GM12878 (cell line): ENCODE measurements at regions of chr14 and their contacts with region 1.

Region 1: DNA sequence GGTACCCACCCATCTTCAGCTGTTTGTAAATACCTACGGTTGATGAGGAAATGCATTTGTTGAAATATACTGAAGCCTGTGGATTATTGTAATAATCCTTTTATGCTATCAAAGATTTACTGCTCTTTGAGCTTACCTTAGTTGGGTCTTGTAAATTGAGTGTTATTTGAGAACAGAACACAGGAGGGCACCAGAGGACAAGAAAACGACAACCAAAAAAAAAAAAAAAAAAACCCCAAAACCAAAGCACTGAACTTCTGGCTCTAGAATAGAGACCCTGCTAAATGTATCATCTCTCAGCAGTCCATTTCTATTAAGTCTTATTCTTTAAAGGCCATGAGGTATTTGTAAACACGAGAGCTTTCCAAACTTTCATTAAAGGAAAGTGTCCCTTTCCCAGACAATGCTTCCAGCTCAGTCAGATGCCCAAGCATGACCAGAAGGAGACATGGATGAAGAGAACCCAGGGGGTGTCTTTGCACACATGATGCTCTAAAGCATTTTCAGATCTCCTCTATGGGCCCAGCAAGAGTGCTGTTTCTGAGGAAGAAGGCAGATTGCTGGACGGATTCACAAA is 763.9 kb downstream of the NRXN3 start:
- DNase-seq: no peak
- ATAC-seq: peak; percentile 33; the same call in 2 of the 3 replicates
- H3K4me3 ChIP-seq: no peak overlapping the region
- H3K27ac ChIP-seq: no peak overlapping the region
- H3K4me1 ChIP-seq: no peaks in the 10 kb centered on the region
- H3K27me3 ChIP-seq: no peaks in the 10 kb centered on the region
- CTCF ChIP-seq: peak; percentile 33 to 49 (median 41); a peak in 3 of 6 replicates
- EP300 ChIP-seq: no peak
- POLR2A ChIP-seq: no peak
- RAD21 ChIP-seq: peak; percentile 57

Region 2: GRCh38 chr14:78605897-78606500 is 328.0 kb before region 1 on chr14:
- CTCF ChIA-PET with region 1: no interaction called
- POLR2A ChIA-PET with region 1: no interaction called
- RAD21 ChIA-PET with region 1: no interaction called
- SMC1A ChIA-PET with region 1: no interaction called
- in situ Hi-C with region 1: no loop called
- intact Hi-C with region 1: no loop called
- DNase-seq: no peak
- ATAC-seq: no peak
- H3K4me3 ChIP-seq: no peak overlapping the region
- H3K27ac ChIP-seq: no peak overlapping the region
- H3K4me1 ChIP-seq: no peaks in the 10 kb centered on the region
- H3K27me3 ChIP-seq: no peaks in the 10 kb centered on the region
- CTCF ChIP-seq: no peak
- EP300 ChIP-seq: no peak
- POLR2A ChIP-seq: no peak
- RAD21 ChIP-seq: no peak

Region 3: DNA sequence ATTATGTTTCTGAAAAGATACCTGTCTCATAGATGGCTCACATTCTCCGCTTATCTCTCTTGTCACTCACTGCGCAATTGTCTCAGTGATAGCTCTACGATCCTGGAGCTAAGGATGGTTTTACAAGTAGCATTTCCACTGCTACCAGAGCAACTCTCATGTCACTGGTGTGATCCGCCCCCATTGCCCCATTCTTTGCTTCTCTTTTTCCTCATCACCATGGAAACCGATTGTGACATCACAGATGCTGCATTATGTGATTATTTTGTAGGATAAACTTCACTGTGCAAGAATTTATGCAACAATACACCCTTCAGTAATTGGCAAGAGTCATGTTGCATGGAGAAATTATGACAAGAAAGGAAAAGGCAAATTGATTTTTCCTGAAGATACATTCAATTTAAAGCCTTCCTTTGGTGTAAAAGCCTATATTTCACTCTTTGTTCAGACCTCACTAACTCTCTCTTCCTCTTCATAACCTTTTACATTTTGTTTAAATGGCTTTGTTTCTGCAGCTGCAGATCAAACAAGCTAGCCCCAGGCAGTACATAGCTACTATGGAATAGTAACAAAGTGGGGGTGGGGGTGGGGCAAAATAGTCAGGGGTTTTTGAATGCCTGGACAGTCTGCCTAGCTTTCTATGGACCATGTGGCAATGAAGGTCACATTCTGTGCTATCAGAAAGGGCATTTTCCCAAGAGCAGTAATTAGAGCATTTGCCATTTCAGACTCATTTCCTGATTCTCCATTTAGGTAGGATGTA is 224.1 kb before region 1 on chr14:
- CTCF ChIA-PET with region 1: no interaction called
- POLR2A ChIA-PET with region 1: no interaction called
- RAD21 ChIA-PET with region 1: no interaction called
- SMC1A ChIA-PET with region 1: no interaction called
- in situ Hi-C with region 1: no loop called
- intact Hi-C with region 1: no loop called
- DNase-seq: no peak
- ATAC-seq: no peak
- H3K4me3 ChIP-seq: no peak overlapping the region
- H3K27ac ChIP-seq: no peak overlapping the region
- H3K4me1 ChIP-seq: no peaks in the 10 kb centered on the region
- H3K27me3 ChIP-seq: no peaks in the 10 kb centered on the region
- CTCF ChIP-seq: no peak
- EP300 ChIP-seq: no peak
- POLR2A ChIP-seq: no peak
- RAD21 ChIP-seq: no peak

Region 4: GRCh38 chr14:78946949-78947348 is 12.9 kb after region 1 on chr14:
- CTCF ChIA-PET with region 1: interaction called, 16 read pairs
- POLR2A ChIA-PET with region 1: interaction called, 5 read pairs
- RAD21 ChIA-PET with region 1: interaction called, 4 read pairs
- SMC1A ChIA-PET with region 1: no interaction called
- in situ Hi-C with region 1: no loop called
- intact Hi-C with region 1: no loop called
- DNase-seq: no peak
- ATAC-seq: no peak
- H3K4me3 ChIP-seq: no peak overlapping the region
- H3K27ac ChIP-seq: no peak overlapping the region
- H3K4me1 ChIP-seq: no peaks in the 10 kb centered on the region
- H3K27me3 ChIP-seq: no peaks in the 10 kb centered on the region
- CTCF ChIP-seq: no peak
- EP300 ChIP-seq: no peak
- POLR2A ChIP-seq: no peak
- RAD21 ChIP-seq: no peak